GM10248 (cell line): ENCODE measurements at regions of chr6 and their contacts with region 1.

Region 1: DNA sequence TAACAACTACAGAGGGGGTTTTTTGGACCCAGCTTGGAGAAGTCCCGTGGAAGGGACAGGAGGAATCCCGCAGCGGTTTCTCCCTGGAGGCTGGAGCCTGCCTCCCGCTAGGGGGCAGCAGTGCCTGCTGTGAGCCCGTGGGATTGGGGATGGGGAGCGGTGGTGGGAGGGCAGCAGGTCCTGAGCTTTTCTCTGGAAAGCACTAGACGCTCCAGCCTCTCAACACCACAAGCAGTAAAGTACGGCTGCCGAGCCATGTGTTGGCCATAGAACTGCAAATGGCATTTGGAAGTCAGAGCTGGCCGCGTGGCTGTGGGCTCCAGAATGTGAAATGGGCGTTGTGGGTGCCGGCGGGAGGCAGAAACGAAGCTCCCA is 47.7 kb downstream of the GMPR start:
- DNase-seq: peak; percentile 74
- CTCF ChIP-seq: peak; percentile 95

Region 2: GRCh38 chr6:16267428-16268263 is 18.5 kb before region 1 on chr6:
- CTCF ChIA-PET with region 1: interaction called, 13 read pairs
- POLR2A ChIA-PET with region 1: no interaction called
- DNase-seq: no peak
- CTCF ChIP-seq: no peak

Region 3: GRCh38 chr6:16305246-16305725 is 19.2 kb after region 1 on chr6:
- CTCF ChIA-PET with region 1: interaction called, 70 read pairs
- POLR2A ChIA-PET with region 1: no interaction called
- DNase-seq: peak; percentile 90
- CTCF ChIP-seq: no peak

Region 4: DNA sequence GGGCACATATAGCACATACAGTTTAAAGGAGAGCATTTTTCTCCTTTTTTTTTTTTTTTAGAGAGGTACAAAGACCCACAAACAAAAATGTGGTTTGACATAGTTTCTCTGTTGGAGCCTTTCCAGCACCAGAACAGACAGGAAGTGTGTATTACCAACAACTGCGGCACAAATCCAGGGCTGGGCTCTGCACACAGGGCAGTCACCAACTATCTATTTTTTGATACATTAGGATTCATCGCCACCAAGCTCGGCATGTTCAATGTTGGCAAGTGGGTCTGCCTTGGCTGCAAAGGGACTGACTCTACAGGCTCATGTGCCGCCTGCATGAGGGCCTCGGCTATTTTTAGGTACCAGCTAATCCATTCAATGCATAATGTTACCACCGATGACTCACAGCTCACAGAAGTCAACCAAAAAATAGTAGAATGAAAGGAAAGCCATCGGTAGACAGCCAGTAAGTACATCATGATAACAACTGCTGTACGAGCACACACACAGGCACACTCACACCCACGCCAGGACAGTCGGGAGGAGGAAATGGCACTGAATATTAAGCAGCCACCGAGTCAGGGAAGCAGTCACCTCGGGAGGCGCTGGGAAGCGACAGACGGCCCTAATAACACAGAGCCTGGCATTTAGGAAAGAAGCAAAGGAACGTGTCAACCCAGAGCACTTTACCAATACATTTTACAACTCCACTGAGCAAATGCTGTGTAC is 33.8 kb after region 1 on chr6:
- CTCF ChIA-PET with region 1: interaction called, 17 read pairs
- POLR2A ChIA-PET with region 1: no interaction called
- DNase-seq: peak; percentile 59
- CTCF ChIP-seq: no peak

Region 5: GRCh38 chr6:16770701-16771569 is 484.8 kb after region 1 on chr6:
- CTCF ChIA-PET with region 1: interaction called, 33 read pairs
- POLR2A ChIA-PET with region 1: no interaction called
- DNase-seq: peak; percentile 78
- CTCF ChIP-seq: peak; percentile 94